ENCODE measurements at regions of chr1 and their contacts with region 1.

Region 1: GRCh38 chr1:17922833-17923232 is 167.7 kb downstream of the ACTL8 start:
- DNase-seq: peak; percentile 71
- H3K4me3 ChIP-seq: no peak overlapping the region; a peak in 1 of 4 replicates
- H3K27ac ChIP-seq: no peak overlapping the region
- H3K4me1 ChIP-seq: peaks cover 0 to 2% of the 10 kb centered on the region in 2 experiments; a peak in 1 of 4 replicates
- H3K27me3 ChIP-seq: no peaks in the 10 kb centered on the region
- CTCF ChIP-seq: peak; percentile 58
- EP300 ChIP-seq: no peak
- RAD21 ChIP-seq: peak; percentile 94

Region 2: GRCh38 chr1:17933971-17934370 is 11.1 kb after region 1 on chr1:
- CTCF ChIA-PET with region 1: interaction called, 38 read pairs
- POLR2A ChIA-PET with region 1: no interaction called
- DNase-seq: peak; percentile 83
- H3K4me3 ChIP-seq: no peak overlapping the region
- H3K27ac ChIP-seq: peak overlapping the region in 1 of 2 experiments; percentile 87; a peak in 2 of 4 replicates
- H3K4me1 ChIP-seq: peaks cover 0 to 35% of the 10 kb centered on the region in 2 experiments; a peak in 2 of 4 replicates
- H3K27me3 ChIP-seq: no peaks in the 10 kb centered on the region
- CTCF ChIP-seq: no peak
- EP300 ChIP-seq: peak in 1 of 2 experiments; percentile 88; a peak in 2 of 4 replicates
- RAD21 ChIP-seq: peak; percentile 13; the same call in 1 of the 2 replicates

Region 3: GRCh38 chr1:18100491-18101063 is 177.7 kb after region 1 on chr1:
- CTCF ChIA-PET with region 1: interaction called, 131 read pairs
- POLR2A ChIA-PET with region 1: no interaction called
- DNase-seq: peak; percentile 70
- H3K4me3 ChIP-seq: no peak overlapping the region; a peak in 1 of 4 replicates
- H3K27ac ChIP-seq: no peak overlapping the region
- H3K4me1 ChIP-seq: no peaks in the 10 kb centered on the region; a peak in 1 of 4 replicates
- H3K27me3 ChIP-seq: no peaks in the 10 kb centered on the region
- CTCF ChIP-seq: peak; percentile 84
- EP300 ChIP-seq: no peak
- RAD21 ChIP-seq: peak; percentile 80

Region 4: DNA sequence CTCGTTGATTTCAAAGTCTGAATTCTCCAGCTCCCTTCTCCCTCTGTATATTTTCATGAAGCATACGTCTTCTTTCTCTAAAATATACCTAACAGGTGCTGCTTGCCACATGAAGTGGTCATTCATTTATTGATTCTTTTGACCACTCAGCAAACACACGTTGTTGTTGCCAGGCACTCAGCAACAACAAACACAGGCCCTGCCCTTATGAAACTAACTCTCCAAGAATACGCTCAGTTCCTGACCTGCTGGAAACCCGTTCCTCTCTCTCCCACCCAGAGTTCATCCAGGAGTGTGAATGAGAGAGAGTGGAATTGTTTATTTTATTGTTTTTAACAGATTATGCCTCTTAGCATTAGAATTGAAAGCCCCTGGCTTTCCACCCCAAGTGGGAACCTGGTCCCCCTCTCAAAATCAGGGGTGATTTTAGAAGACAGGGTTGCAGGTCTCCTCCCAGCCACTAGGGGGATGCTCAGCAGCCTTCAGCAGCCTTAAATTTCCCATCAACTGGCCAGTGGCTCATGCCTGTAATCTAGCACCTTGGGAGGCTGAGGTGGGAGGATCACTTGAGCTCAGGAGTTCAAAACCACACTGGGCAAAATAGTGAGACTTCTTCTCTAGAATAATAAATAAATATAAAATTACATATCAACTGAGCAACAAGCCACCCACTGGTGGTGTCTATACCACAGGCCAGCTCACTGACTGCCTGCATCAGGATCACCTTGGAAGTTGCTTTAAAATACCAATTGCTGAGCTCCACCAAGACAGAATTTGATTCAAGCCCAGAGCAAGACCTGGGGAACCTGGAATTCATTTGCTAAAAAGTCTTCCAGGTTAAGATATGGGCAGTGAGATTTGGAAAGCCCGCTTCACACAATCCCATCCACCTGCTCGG is 376.9 kb after region 1 on chr1:
- CTCF ChIA-PET with region 1: interaction called, 72 read pairs
- POLR2A ChIA-PET with region 1: no interaction called
- DNase-seq: peak; percentile 73
- H3K4me3 ChIP-seq: no peak overlapping the region; a peak in 1 of 4 replicates
- H3K27ac ChIP-seq: no peak overlapping the region
- H3K4me1 ChIP-seq: peaks cover 0 to 4% of the 10 kb centered on the region in 2 experiments; a peak in 1 of 4 replicates
- H3K27me3 ChIP-seq: no peaks in the 10 kb centered on the region
- CTCF ChIP-seq: peak; percentile 41
- EP300 ChIP-seq: no peak
- RAD21 ChIP-seq: peak; percentile 58

Region 5: GRCh38 chr1:18575620-18576019 is 652.8 kb after region 1 on chr1:
- CTCF ChIA-PET with region 1: interaction called, 54 read pairs
- POLR2A ChIA-PET with region 1: interaction called, 3 read pairs
- DNase-seq: peak; percentile 80
- H3K4me3 ChIP-seq: no peak overlapping the region; a peak in 1 of 4 replicates
- H3K27ac ChIP-seq: no peak overlapping the region
- H3K4me1 ChIP-seq: no peaks in the 10 kb centered on the region
- H3K27me3 ChIP-seq: no peaks in the 10 kb centered on the region
- CTCF ChIP-seq: peak; percentile 66
- EP300 ChIP-seq: no peak
- RAD21 ChIP-seq: peak; percentile 78